ENCODE measurements at regions of chr11 and their contacts with region 1.

Region 1: GRCh38 chr11:118401151-118401878 is at the start of gene ATP5MG:
- DNase-seq: peak; percentile 79 to 91 (median 83)
- H3K4me3 ChIP-seq: peak within 1 kb of the TSS; percentile 80 to 98 (median 82)
- H3K4me3 Mint-ChIP-seq: peak within 1 kb of the TSS; percentile 95 to 98
- H3K27ac ChIP-seq: peak within 1 kb of the TSS; percentile 39 to 90
- H3K27ac Mint-ChIP-seq: peak within 1 kb of the TSS; percentile 97 to 100 (median 99)
- H3K4me1 ChIP-seq: peaks cover 22 to 25% of the 10 kb centered on the region in 2 donors
- H3K4me1 Mint-ChIP-seq: peaks cover 30% of the 10 kb centered on the region
- H3K27me3 ChIP-seq: no peaks in the 10 kb centered on the region
- H3K27me3 Mint-ChIP-seq: no peaks in the 10 kb centered on the region
- CTCF ChIP-seq: no peak
- polyA plus RNA-seq, gene ATP5MG: 257 to 688 (median 648) TPM

Region 2: DNA sequence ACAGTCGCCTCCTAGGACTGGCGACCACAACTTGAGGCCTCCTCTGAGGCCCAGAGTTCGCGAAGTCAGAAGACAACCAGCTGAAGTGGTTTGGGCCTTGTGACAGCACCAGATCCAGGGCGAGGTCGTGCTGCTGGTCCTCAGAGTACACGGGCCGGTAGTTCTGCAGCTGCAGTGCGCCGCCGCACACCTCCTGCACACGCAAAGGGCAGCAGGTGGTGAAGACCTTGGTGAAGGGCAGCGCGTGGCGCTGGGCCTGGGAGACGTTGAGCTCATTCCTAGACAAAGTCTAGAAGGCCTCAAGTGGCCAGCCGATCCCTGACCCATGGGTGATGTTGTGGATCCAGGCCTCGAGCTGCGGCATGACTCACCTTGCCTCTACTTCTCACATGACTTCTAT is 78.6 kb before region 1 on chr11:
- intact Hi-C with region 1: no loop called
- DNase-seq: no peak
- H3K4me3 ChIP-seq: no peak overlapping the region
- H3K4me3 Mint-ChIP-seq: no peak overlapping the region
- H3K27ac ChIP-seq: no peak overlapping the region
- H3K27ac Mint-ChIP-seq: peak overlapping the region in 1 of 7 donors; percentile 32
- H3K4me1 ChIP-seq: peaks cover 35 to 46% of the 10 kb centered on the region in 2 donors
- H3K4me1 Mint-ChIP-seq: peaks cover 41% of the 10 kb centered on the region
- H3K27me3 ChIP-seq: no peaks in the 10 kb centered on the region
- H3K27me3 Mint-ChIP-seq: peaks cover 2% of the 10 kb centered on the region in 3 donors
- CTCF ChIP-seq: no peak

Region 3: DNA sequence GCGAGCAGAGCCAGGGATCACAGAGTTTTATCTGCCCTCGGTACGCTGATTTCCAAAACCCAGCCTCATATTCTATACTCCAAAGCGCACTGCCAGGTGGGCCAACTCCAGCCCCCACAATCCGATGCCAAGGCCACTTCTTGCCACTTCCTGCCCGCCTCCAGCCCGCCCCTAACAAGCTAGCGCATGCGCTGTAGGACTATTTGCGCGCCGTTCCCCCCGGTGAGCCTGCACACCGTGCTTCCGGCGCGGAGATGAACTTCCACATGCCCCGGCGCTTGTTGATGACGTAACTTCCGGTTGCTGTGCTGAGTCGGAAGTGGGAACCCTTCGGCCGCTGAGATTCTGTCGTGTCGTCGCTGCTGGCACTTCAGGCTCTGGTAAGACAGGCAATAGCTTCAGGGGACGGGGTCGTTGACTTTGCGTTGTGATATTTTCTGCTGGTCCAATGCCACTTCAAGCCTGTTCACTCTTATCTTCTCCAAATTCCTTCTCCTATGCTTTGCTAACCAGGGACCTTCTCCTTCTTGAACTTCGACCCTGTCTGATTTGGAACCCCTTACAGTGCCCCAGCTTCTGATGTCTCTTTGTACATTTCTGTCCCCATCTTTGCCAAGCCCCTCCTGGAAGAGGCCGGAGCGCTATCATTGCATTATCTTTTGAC is 41.9 kb before region 1 on chr11 and contains the start of gene UBE4A:
- intact Hi-C with region 1: no loop called
- DNase-seq: peak; percentile 95 to 99 (median 98)
- H3K4me3 ChIP-seq: peak within 1 kb of the TSS; percentile 70 to 100 (median 98)
- H3K4me3 Mint-ChIP-seq: peak within 1 kb of the TSS; percentile 98 to 99
- H3K27ac ChIP-seq: peak within 1 kb of the TSS; percentile 46 to 97
- H3K27ac Mint-ChIP-seq: peak within 1 kb of the TSS; percentile 93 to 99 (median 96)
- H3K4me1 ChIP-seq: peaks cover 12 to 20% of the 10 kb centered on the region in 2 donors
- H3K4me1 Mint-ChIP-seq: peaks cover 28% of the 10 kb centered on the region
- H3K27me3 ChIP-seq: no peaks in the 10 kb centered on the region
- H3K27me3 Mint-ChIP-seq: peaks cover 5 to 11% (median 7%) of the 10 kb centered on the region in 3 donors
- CTCF ChIP-seq: no peak
- polyA plus RNA-seq, gene UBE4A: 21.6 to 33.9 (median 22.7) TPM

Region 4: GRCh38 chr11:118380571-118380970 is 20.7 kb before region 1 on chr11:
- intact Hi-C with region 1: no loop called
- DNase-seq: no peak
- H3K4me3 ChIP-seq: no peak overlapping the region
- H3K4me3 Mint-ChIP-seq: no peak overlapping the region
- H3K27ac ChIP-seq: no peak overlapping the region
- H3K27ac Mint-ChIP-seq: no peak overlapping the region
- H3K4me1 ChIP-seq: no peaks in the 10 kb centered on the region
- H3K4me1 Mint-ChIP-seq: no peaks in the 10 kb centered on the region
- H3K27me3 ChIP-seq: no peaks in the 10 kb centered on the region
- H3K27me3 Mint-ChIP-seq: peaks cover 0 to 2% (median 0%) of the 10 kb centered on the region in 3 donors
- CTCF ChIP-seq: no peak

Region 5: GRCh38 chr11:118435893-118436624 is 34.7 kb after region 1 on chr11 and contains the start of gene KMT2A:
- intact Hi-C with region 1: loop called (anchors 2 to 5 kb)
- DNase-seq: peak; percentile 86 to 92 (median 90)
- H3K4me3 ChIP-seq: peak within 1 kb of the TSS; percentile 85 to 94 (median 94)
- H3K4me3 Mint-ChIP-seq: peak within 1 kb of the TSS; percentile 93 to 96
- H3K27ac ChIP-seq: peak within 1 kb of the TSS; percentile 73
- H3K27ac Mint-ChIP-seq: peak within 1 kb of the TSS; percentile 74 to 89 (median 87)
- H3K4me1 ChIP-seq: peaks cover 39 to 52% of the 10 kb centered on the region in 2 donors
- H3K4me1 Mint-ChIP-seq: peaks cover 51% of the 10 kb centered on the region
- H3K27me3 ChIP-seq: no peaks in the 10 kb centered on the region
- H3K27me3 Mint-ChIP-seq: peaks cover 0 to 6% (median 0%) of the 10 kb centered on the region in 3 donors
- CTCF ChIP-seq: no peak
- polyA plus RNA-seq, gene KMT2A: 3.3 to 21.7 (median 3.5) TPM

Region 6: GRCh38 chr11:118488480-118489109 is 87.3 kb after region 1 on chr11:
- intact Hi-C with region 1: loop called in 1 of 2 experiments (anchors 5 kb)
- DNase-seq: peak; percentile 58 to 67 (median 61)
- H3K4me3 ChIP-seq: no peak overlapping the region
- H3K4me3 Mint-ChIP-seq: no peak overlapping the region
- H3K27ac ChIP-seq: no peak overlapping the region
- H3K27ac Mint-ChIP-seq: peak overlapping the region in 1 of 7 donors; percentile 6
- H3K4me1 ChIP-seq: no peaks in the 10 kb centered on the region
- H3K4me1 Mint-ChIP-seq: no peaks in the 10 kb centered on the region
- H3K27me3 ChIP-seq: no peaks in the 10 kb centered on the region
- H3K27me3 Mint-ChIP-seq: no peaks in the 10 kb centered on the region
- CTCF ChIP-seq: peak; percentile 82